ENCODE measurements at regions of chr1 and their contacts with region 1.

Region 1: GRCh38 chr1:201254625-201255506 is 28.4 kb upstream of the PKP1 start:
- DNase-seq: peak; percentile 77
- ATAC-seq: peak; percentile 62

Region 2: GRCh38 chr1:201361652-201362504 is 107.0 kb after region 1 on chr1:
- intact Hi-C with region 1: loop called (anchors 10 kb)
- DNase-seq: no peak
- ATAC-seq: peak; percentile 62

Region 3: DNA sequence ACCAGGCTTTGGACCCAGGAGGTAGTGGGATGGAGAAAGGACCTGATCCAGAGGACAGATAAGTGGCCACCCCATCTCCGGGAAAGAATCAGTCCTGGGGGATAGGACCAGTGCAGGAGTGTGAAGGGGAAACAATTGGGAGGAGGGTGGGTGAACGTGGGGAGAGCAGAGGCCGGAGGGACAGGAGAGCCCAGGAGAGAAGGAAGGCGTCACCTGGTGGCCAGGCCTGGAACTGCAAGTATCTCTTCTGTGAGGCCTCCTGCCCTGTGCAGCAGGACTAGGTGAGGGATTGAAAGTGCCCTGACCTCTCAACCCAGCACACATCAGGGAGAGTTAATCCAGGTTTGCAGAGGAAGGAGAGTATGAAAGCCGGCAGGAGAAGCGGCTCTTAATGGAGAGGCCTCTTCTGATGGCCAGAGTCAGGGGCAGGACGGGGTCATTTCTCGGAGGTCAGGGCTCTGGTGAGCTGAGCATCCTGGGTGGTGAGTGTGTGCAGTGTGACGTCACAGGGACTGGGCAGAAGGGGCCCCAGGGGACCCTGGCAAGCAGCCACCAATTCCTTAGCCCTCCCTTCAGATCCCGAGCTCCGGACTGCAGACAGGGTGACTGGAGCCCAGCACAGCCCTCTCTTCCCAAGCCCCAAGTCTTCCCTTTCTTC is 153.4 kb after region 1 on chr1:
- intact Hi-C with region 1: loop called (anchors 10 kb)
- DNase-seq: peak; percentile 89
- ATAC-seq: peak; percentile 77

Region 4: GRCh38 chr1:201511941-201512539 is 257.2 kb after region 1 on chr1:
- intact Hi-C with region 1: loop called (anchors 10 kb)
- DNase-seq: peak; percentile 75
- ATAC-seq: peak; percentile 82

Measured in sciatic nerve (tissue), 2 donors.